HepG2 (cell line): ENCODE measurements at regions of chr11 and their contacts with region 1.

Region 1: DNA sequence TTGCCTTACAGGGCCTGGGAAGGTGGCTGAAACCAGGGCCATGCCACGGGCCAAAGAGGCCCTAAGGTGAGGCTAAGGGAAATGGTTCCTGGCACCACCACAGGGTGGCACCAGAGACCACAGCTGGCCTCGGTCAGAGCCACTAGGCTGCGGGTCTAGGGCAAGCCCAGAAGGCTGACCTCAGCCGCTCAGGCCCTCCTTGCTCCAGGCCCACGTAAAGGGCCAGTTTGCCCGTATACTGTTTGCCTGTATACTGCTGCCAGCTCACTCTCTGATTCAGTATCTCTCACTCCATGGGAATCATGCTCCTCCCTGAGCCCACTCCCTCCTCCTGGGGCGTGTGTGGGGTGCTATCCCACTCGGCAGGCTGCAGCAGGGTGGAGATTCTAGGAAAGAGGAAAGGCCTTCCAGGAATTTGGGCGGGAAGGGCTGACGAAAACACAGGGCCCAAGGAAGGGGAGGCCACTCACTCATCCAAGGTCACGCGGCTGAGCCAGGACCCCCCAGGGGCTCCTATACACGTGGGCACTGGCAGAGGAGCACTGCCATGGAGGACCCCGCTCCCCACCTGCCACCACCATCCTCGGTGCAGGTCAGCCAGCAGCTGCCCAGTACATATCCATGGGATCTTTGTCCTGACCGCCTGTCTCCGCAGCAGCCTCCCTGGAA is 62.4 kb downstream of the NECTIN1 start:
- DNase-seq: peak; percentile 63
- ATAC-seq: peak; percentile 91
- H3K4me3 ChIP-seq: no peak overlapping the region
- H3K27ac ChIP-seq: no peak overlapping the region
- H3K4me1 ChIP-seq: peaks cover 25% of the 10 kb centered on the region
- H3K27me3 ChIP-seq: no peaks in the 10 kb centered on the region
- CTCF ChIP-seq: peak; percentile 99
- EP300 ChIP-seq: no peak
- POLR2A ChIP-seq: no peak
- RAD21 ChIP-seq: peak; percentile 99

Region 2: DNA sequence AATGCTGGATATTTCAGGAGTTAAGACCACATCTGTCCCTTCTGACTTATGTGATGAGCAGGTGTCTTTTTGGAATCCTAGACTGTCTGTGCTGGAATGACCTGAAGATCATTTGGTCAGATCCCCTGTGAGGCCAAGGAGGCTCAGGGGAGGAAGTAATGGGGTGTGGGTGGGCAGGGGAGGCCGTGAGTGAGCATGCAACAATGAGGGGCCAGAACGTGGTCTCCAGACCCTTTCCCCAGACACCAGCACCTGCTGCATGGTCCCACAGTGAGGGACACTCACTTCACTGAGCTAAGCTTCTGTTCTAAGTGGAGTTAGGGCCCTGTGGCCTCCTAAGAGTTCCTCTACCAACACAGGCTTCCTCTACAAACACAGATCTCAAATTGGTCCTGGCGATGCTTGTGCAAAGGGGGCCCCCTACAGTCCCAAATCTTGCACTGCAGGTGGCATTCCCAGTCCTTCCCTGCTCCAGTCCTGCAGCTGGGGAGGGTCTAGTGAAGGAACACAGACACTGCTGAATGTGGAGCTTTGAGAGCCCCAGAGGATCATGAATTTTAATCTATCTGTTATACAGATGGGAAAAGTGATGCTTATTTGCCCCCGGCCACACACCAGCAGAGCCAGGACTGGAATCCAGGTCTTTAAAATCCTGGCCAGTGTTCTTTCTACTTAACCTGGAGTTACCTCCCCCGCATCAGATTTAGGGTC is 292.5 kb before region 1 on chr11:
- CTCF ChIA-PET with region 1: no interaction called
- POLR2A ChIA-PET with region 1: no interaction called
- in situ Hi-C with region 1: no loop called
- intact Hi-C with region 1: no loop called
- DNase-seq: peak; percentile 74
- ATAC-seq: peak; percentile 55
- H3K4me3 ChIP-seq: no peak overlapping the region
- H3K27ac ChIP-seq: no peak overlapping the region
- H3K4me1 ChIP-seq: peaks cover 100% of the 10 kb centered on the region
- H3K27me3 ChIP-seq: no peaks in the 10 kb centered on the region
- CTCF ChIP-seq: peak; percentile 95
- EP300 ChIP-seq: 0 out of 4 replicates have a peak, but pooled peaks of 1 of the 2 experiments have one; percentile 9
- POLR2A ChIP-seq: no peak
- RAD21 ChIP-seq: peak; percentile 90

Region 3: DNA sequence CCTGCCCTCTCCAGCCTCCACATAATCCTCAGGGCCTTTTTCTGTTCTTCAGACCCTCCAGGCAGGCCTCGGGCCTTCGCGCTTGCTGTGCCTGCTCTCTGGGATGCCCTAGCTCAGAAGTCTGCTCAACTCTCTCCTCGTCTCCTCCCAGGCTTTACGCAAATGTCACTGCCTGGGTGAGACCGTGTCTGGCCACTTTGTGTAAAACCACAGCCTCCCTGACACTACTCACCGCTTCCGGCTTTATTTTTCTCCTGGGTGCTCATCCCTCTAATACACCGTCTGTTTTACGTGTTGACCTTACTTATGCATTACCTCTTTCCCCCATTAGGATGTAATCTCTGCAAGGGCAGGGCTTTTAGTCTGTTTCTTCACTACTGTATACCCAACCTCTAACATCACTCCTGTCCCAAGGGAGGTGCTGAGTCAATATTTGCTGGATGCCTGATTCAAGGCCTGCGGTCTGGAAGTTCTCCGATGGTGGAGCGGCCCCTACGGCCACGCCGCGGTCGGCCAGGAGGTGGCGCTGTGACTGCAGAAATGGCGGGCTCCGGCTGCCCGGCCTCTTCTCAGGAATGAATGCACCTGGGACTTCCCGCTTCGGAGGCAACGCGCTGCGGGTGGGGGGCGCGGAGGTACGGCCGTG is 185.5 kb before region 1 on chr11:
- CTCF ChIA-PET with region 1: interaction called, 4 read pairs
- POLR2A ChIA-PET with region 1: no interaction called
- in situ Hi-C with region 1: no loop called
- intact Hi-C with region 1: loop called (anchors 10 kb)
- DNase-seq: peak; percentile 99
- ATAC-seq: peak; percentile 96
- H3K4me3 ChIP-seq: peak overlapping the region in 1 of 3 experiments; percentile 44; a peak in 1 of 6 replicates
- H3K27ac ChIP-seq: no peak overlapping the region
- H3K4me1 ChIP-seq: peaks cover 41% of the 10 kb centered on the region
- H3K27me3 ChIP-seq: peaks cover 9 to 18% of the 10 kb centered on the region in 2 experiments; a peak in 4 of 5 replicates
- CTCF ChIP-seq: peak; percentile 99
- EP300 ChIP-seq: peak; percentile 49 to 72; a peak in 2 of 4 replicates
- POLR2A ChIP-seq: no peak
- RAD21 ChIP-seq: peak; percentile 97

Region 4: GRCh38 chr11:119728651-119729580 is 62.3 kb after region 1 on chr11 and contains the start of gene NECTIN1:
- CTCF ChIA-PET with region 1: interaction called, 16 read pairs
- POLR2A ChIA-PET with region 1: interaction called, 9 read pairs
- in situ Hi-C with region 1: no loop called
- intact Hi-C with region 1: loop called (anchors 1 kb)
- DNase-seq: peak; percentile 76
- ATAC-seq: peak; percentile 89
- H3K4me3 ChIP-seq: peak within 1 kb of the TSS; percentile 62 to 80 (median 73)
- H3K27ac ChIP-seq: peak within 1 kb of the TSS; percentile 13
- H3K4me1 ChIP-seq: peaks cover 35% of the 10 kb centered on the region
- H3K27me3 ChIP-seq: peaks cover 4 to 23% of the 10 kb centered on the region in 2 experiments; a peak in 4 of 5 replicates
- CTCF ChIP-seq: peak; percentile 97
- EP300 ChIP-seq: no peak
- POLR2A ChIP-seq: peak; percentile 72 to 76
- RAD21 ChIP-seq: peak; percentile 97
- total RNA-seq, gene NECTIN1: 4.1 and 7.3 TPM in 2 replicates

Region 5: GRCh38 chr11:120013325-120014270 is 347.0 kb after region 1 on chr11:
- CTCF ChIA-PET with region 1: interaction called, 17 read pairs
- POLR2A ChIA-PET with region 1: no interaction called
- in situ Hi-C with region 1: loop called (anchors 10 kb)
- intact Hi-C with region 1: no loop called
- DNase-seq: peak; percentile 32
- ATAC-seq: peak; percentile 98
- H3K4me3 ChIP-seq: no peak overlapping the region
- H3K27ac ChIP-seq: no peak overlapping the region
- H3K4me1 ChIP-seq: no peaks in the 10 kb centered on the region
- H3K27me3 ChIP-seq: peaks cover 7 to 50% of the 10 kb centered on the region in 2 experiments; a peak in 3 of 5 replicates
- CTCF ChIP-seq: peak; percentile 85
- EP300 ChIP-seq: no peak
- POLR2A ChIP-seq: no peak
- RAD21 ChIP-seq: peak; percentile 76

Region 6: DNA sequence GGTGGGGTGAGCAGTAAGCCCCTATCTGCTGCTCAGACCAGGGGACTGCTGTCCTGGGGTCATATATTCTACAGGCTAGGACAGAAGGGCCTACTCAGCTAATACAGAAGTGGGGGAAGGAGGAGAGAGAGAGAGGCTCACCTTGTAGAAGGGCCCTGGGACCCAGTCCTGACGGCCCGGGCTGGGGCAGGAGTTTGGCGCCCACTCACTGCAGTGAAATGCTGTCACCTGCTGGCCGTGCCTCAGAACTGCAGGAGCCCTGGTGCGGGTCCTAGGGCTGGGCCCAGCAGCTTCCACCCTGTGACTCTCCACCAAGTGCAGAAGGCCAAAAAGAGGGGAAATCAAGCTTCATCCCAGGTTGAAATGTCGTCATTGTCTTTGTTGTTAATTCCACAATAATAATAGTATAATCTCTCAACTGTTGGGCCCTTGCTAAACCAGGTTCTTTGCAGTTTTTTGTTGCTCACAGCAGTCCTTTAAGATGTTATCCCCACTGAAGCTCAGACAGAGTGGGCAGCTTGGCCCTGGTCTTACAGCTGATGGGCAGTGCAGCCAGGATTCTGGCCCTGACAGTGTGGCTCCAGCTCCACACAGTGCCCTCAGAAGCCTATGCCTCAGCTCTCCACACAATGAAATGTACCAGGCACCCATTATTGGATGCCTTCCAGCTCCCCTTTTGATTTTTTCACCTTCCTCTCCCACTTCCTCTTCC is 441.7 kb after region 1 on chr11:
- CTCF ChIA-PET with region 1: interaction called, 7 read pairs
- POLR2A ChIA-PET with region 1: no interaction called
- in situ Hi-C with region 1: loop called (anchors 10 kb)
- intact Hi-C with region 1: loop called (anchors 1 kb)
- DNase-seq: peak; percentile 14
- ATAC-seq: peak; percentile 90
- H3K4me3 ChIP-seq: no peak overlapping the region
- H3K27ac ChIP-seq: no peak overlapping the region
- H3K4me1 ChIP-seq: no peaks in the 10 kb centered on the region
- H3K27me3 ChIP-seq: peaks cover 4 to 56% of the 10 kb centered on the region in 2 experiments; a peak in 4 of 5 replicates
- CTCF ChIP-seq: peak; percentile 96
- EP300 ChIP-seq: no peak
- POLR2A ChIP-seq: no peak
- RAD21 ChIP-seq: peak; percentile 93